GM10248 (cell line): ENCODE measurements at regions of chr12 and their contacts with region 1.

Region 1: GRCh38 chr12:67441736-67442346 is 172.7 kb downstream of the CAND1 start:
- DNase-seq: peak; percentile 63
- CTCF ChIP-seq: peak; percentile 70

Region 2: GRCh38 chr12:67315661-67316060 is 126.2 kb before region 1 on chr12:
- CTCF ChIA-PET with region 1: no interaction called
- POLR2A ChIA-PET with region 1: no interaction called
- DNase-seq: no peak
- CTCF ChIP-seq: no peak

Region 3: GRCh38 chr12:67430708-67431335 is 11.0 kb before region 1 on chr12:
- CTCF ChIA-PET with region 1: interaction called, 22 read pairs
- POLR2A ChIA-PET with region 1: no interaction called
- DNase-seq: no peak
- CTCF ChIP-seq: no peak

Region 4: GRCh38 chr12:67452119-67452805 is 10.4 kb after region 1 on chr12:
- CTCF ChIA-PET with region 1: interaction called, 23 read pairs
- POLR2A ChIA-PET with region 1: no interaction called
- DNase-seq: peak; percentile 20
- CTCF ChIP-seq: no peak